Activated B cell treated with CpG ODN at 0.5 μM for 24 hours (primary cell): ENCODE measurements at regions of chr15 and their contacts with region 1.

Region 1: GRCh38 chr15:77419836-77420609 is at the start of gene PEAK1:
- DNase-seq: peak; percentile 98
- ATAC-seq: peak; percentile 96
- H3K4me3 Mint-ChIP-seq: peak within 1 kb of the TSS; percentile 97
- H3K27ac Mint-ChIP-seq: peak within 1 kb of the TSS; percentile 98
- H3K4me1 Mint-ChIP-seq: peaks cover 46% of the 10 kb centered on the region
- H3K27me3 Mint-ChIP-seq: no peaks in the 10 kb centered on the region
- CTCF ChIP-seq: no peak
- total RNA-seq, gene PEAK1: 31.8 and 34.2 TPM in 2 replicates

Region 2: GRCh38 chr15:75842722-75843551 is 1577.1 kb before region 1 on chr15 and contains the start of gene UBE2Q2:
- CTCF ChIA-PET with region 1: no interaction called
- POLR2A ChIA-PET with region 1: no interaction called
- intact Hi-C with region 1: loop called (anchors 2 kb)
- DNase-seq: peak; percentile 65
- ATAC-seq: peak; percentile 62
- H3K4me3 Mint-ChIP-seq: peak within 1 kb of the TSS; percentile 94
- H3K27ac Mint-ChIP-seq: peak within 1 kb of the TSS; percentile 93
- H3K4me1 Mint-ChIP-seq: peaks cover 35% of the 10 kb centered on the region
- H3K27me3 Mint-ChIP-seq: no peaks in the 10 kb centered on the region
- CTCF ChIP-seq: no peak
- total RNA-seq, gene UBE2Q2: 16.9 and 23.2 TPM in 2 replicates

Region 3: DNA sequence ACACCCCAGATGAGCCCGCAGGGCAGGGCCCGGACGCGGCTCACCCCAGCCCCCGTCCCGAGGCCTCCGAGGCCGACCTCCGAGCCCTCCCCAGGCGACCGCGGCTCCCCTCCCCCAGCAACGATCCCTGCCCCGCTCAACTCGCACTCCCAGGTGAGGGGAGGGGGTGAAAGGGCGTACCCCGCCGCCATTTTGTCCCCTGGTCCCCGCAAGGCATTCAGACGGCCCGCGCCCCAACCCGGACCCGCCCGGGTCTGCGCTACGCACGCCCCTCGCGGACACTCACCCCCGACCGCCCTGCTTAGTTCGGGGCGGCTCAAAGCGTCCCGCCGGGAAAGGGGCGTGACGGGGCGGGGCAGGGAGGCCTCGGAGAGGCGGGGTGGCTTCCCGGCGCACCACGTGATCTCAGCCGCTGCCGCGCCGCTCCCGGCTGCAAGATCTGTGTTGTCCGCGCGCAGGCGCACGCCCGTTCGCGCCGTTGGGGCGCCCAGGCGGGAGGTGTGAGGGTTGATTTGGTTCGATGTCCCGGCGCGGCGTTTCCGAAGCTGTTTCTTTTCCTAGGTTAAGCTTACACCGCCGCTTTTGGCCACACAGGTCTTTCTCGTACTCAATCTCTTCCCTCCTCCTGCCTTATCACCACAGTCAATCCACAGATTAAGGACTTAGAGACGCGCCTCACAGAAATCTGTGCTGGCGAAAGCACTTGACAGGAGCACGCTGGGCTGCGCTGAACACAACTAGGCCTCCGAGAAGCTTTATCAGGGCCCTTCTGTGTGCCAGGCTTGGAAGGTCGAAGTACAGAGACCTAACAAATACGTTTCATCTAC is 514.8 kb before region 1 on chr15 and contains the start of gene SCAPER:
- CTCF ChIA-PET with region 1: no interaction called
- POLR2A ChIA-PET with region 1: no interaction called
- intact Hi-C with region 1: loop called (anchors 10 kb)
- DNase-seq: peak; percentile 92
- ATAC-seq: peak; percentile 86
- H3K4me3 Mint-ChIP-seq: peak within 1 kb of the TSS; percentile 94
- H3K27ac Mint-ChIP-seq: peak within 1 kb of the TSS; percentile 87
- H3K4me1 Mint-ChIP-seq: peaks cover 48% of the 10 kb centered on the region
- H3K27me3 Mint-ChIP-seq: no peaks in the 10 kb centered on the region
- CTCF ChIP-seq: no peak
- total RNA-seq, gene SCAPER: 28.9 and 38.8 TPM in 2 replicates

Region 4: GRCh38 chr15:77070495-77071304 is 349.3 kb before region 1 on chr15 and contains the start of gene TSPAN3:
- CTCF ChIA-PET with region 1: no interaction called
- POLR2A ChIA-PET with region 1: interaction called, 7 read pairs
- intact Hi-C with region 1: loop called (anchors 1 kb)
- DNase-seq: peak; percentile 95
- ATAC-seq: peak; percentile 95
- H3K4me3 Mint-ChIP-seq: peak within 1 kb of the TSS; percentile 89
- H3K27ac Mint-ChIP-seq: peak within 1 kb of the TSS; percentile 81
- H3K4me1 Mint-ChIP-seq: peaks cover 50% of the 10 kb centered on the region
- H3K27me3 Mint-ChIP-seq: no peaks in the 10 kb centered on the region
- CTCF ChIP-seq: no peak
- total RNA-seq, gene TSPAN3: 104 and 113 TPM in 2 replicates

Region 5: GRCh38 chr15:77409259-77410156 is 10.5 kb before region 1 on chr15:
- CTCF ChIA-PET with region 1: interaction called, 6 read pairs
- POLR2A ChIA-PET with region 1: interaction called, 15 read pairs
- intact Hi-C with region 1: loop called (anchors 1 kb)
- DNase-seq: no peak
- ATAC-seq: peak; percentile 79
- H3K4me3 Mint-ChIP-seq: peak overlapping the region; percentile 72
- H3K27ac Mint-ChIP-seq: peak overlapping the region; percentile 78
- H3K4me1 Mint-ChIP-seq: peaks cover 55% of the 10 kb centered on the region
- H3K27me3 Mint-ChIP-seq: no peaks in the 10 kb centered on the region
- CTCF ChIP-seq: no peak

Region 6: DNA sequence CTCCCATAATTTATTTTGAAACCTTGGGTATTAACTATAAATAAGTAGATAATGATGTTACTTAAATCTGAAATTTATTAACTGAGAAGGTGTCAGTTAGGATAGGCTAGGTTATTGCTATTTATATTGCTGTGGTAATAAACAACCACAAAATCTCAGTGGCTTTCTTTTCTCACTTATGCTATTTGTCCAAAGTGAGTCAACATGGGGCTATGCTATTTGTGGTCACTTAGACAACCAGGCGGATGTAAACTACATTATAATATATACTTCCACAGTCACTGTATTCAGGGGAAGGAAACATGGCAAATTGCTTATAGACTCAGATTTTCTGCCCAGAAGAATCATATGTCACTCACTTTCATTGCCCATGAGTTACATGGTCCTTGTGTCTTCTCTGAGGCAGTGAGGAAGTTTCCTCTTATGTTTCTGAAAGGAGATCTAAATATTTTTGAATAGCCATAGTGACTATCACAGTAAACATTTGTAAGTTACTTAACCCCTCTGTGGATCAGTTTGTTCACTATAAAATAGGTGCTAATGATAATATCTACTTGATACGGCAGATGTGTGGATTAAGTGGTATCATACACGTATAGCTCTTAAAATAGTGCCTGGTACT is 20.5 kb after region 1 on chr15:
- CTCF ChIA-PET with region 1: no interaction called
- POLR2A ChIA-PET with region 1: no interaction called
- intact Hi-C with region 1: loop called (anchors 2 kb)
- DNase-seq: no peak
- ATAC-seq: no peak
- H3K4me3 Mint-ChIP-seq: no peak overlapping the region
- H3K27ac Mint-ChIP-seq: no peak overlapping the region
- H3K4me1 Mint-ChIP-seq: peaks cover 38% of the 10 kb centered on the region
- H3K27me3 Mint-ChIP-seq: no peaks in the 10 kb centered on the region
- CTCF ChIP-seq: no peak